T-cell (primary cell): ENCODE measurements at regions of chr14 and their contacts with region 1.

Region 1: GRCh38 chr14:92121670-92122350 is at the starts of genes CPSF2 and NDUFB1:
- DNase-seq: peak; percentile 48 to 89 (median 77)
- ATAC-seq: peak; percentile 89 to 91 (median 90)
- H3K4me3 ChIP-seq: peak within 1 kb of the TSS; percentile 66 to 94
- H3K4me3 Mint-ChIP-seq: peak within 1 kb of the TSS; percentile 98 to 99 (median 98)
- H3K27ac ChIP-seq: peak within 1 kb of the TSS; percentile 81
- H3K27ac Mint-ChIP-seq: peak within 1 kb of the TSS; percentile 100
- H3K4me1 ChIP-seq: peaks cover 18 to 26% of the 10 kb centered on the region in 2 experiments
- H3K4me1 Mint-ChIP-seq: peaks cover 42 to 52% (median 50%) of the 10 kb centered on the region in 3 donors
- H3K27me3 ChIP-seq: no peaks in the 10 kb centered on the region
- H3K27me3 Mint-ChIP-seq: no peaks in the 10 kb centered on the region
- total RNA-seq, gene CPSF2: 27.6 to 57.4 (median 45.5) TPM
- total RNA-seq, gene NDUFB1: 40.1 to 81.1 (median 75.0) TPM

Region 2: GRCh38 chr14:92021523-92021922 is 100.3 kb before region 1 on chr14:
- CTCF ChIA-PET with region 1: no interaction called
- POLR2A ChIA-PET with region 1: no interaction called
- DNase-seq: no peak
- ATAC-seq: no peak
- H3K4me3 ChIP-seq: no peak overlapping the region
- H3K4me3 Mint-ChIP-seq: no peak overlapping the region
- H3K27ac ChIP-seq: no peak overlapping the region
- H3K27ac Mint-ChIP-seq: no peak overlapping the region
- H3K4me1 ChIP-seq: no peaks in the 10 kb centered on the region
- H3K4me1 Mint-ChIP-seq: peaks cover 4 to 19% (median 12%) of the 10 kb centered on the region in 3 donors
- H3K27me3 ChIP-seq: no peaks in the 10 kb centered on the region
- H3K27me3 Mint-ChIP-seq: no peaks in the 10 kb centered on the region

Region 3: DNA sequence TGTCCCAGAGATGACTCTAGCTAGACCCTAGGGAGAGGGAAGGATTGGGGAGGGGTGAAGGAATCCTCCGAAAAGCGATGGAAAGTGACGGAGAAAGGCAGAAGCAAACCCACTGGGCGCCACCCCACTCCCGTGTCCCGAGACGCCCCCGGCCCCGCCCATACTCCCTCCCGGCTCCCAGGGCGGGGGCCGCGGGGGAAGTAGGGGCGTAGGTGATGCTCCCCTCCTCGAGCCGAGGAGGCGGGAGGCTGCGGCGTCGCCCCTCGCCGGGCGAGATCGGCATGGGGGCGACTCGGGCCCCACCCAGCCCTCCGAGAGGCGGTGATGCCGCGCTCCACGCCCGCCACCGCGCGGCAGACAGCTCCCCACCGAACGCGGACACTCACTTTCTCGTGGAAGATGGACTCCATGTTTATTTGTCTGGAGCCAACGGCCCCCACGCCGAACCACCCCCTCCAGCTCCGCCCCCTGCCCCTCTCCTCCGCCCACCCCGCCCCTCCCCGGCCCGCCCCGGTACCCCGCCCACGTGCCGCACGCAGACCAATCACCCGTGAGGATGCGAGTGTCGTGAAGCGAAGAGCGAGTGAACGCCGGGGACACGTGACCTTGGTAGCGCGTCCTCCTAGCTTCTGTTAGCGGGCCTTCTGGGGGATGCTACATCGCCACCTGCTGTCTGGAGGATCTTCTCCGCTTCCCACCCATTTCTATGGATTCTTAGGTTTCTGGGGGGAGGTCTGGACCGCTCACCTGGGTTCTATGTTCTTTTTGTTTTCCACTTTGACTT is 15.5 kb before region 1 on chr14 and contains the start of gene ATXN3:
- CTCF ChIA-PET with region 1: interaction called, 6 to 125 read pairs
- POLR2A ChIA-PET with region 1: interaction called, 6 to 14 read pairs
- DNase-seq: peak; percentile 82 to 98 (median 94)
- ATAC-seq: peak; percentile 92 to 94 (median 94)
- H3K4me3 ChIP-seq: peak within 1 kb of the TSS; percentile 83 to 90
- H3K4me3 Mint-ChIP-seq: peak within 1 kb of the TSS; percentile 90 to 99 (median 96)
- H3K27ac ChIP-seq: peak within 1 kb of the TSS; percentile 47
- H3K27ac Mint-ChIP-seq: peak within 1 kb of the TSS; percentile 93
- H3K4me1 ChIP-seq: peaks cover 14 to 29% of the 10 kb centered on the region in 2 experiments
- H3K4me1 Mint-ChIP-seq: peaks cover 55 to 61% (median 56%) of the 10 kb centered on the region in 3 donors
- H3K27me3 ChIP-seq: no peaks in the 10 kb centered on the region
- H3K27me3 Mint-ChIP-seq: no peaks in the 10 kb centered on the region
- total RNA-seq, gene ATXN3: 31.0 to 50.2 (median 41.8) TPM

Region 4: DNA sequence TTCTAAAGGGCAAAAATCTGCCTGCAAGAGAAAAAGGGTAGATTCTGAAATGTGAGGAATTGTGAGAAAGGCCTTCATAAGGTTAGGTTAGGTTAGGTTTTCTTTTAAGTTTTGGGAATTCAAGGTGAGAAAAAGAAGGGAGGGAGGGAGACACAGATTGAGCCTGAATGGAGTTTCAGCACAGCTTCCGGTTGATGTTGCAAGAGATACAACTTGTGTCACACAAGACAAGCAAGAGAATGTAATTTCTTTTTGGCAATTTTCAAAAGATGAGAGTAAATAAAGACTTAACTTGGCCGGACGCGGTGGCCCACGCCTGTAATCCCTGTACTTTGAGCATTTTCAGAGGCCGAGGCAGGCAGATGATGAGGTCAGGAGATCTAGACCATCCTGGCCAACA is 63.7 kb after region 1 on chr14:
- CTCF ChIA-PET with region 1: no interaction called
- POLR2A ChIA-PET with region 1: no interaction called
- DNase-seq: no peak
- ATAC-seq: no peak
- H3K4me3 ChIP-seq: no peak overlapping the region
- H3K4me3 Mint-ChIP-seq: no peak overlapping the region
- H3K27ac ChIP-seq: no peak overlapping the region
- H3K27ac Mint-ChIP-seq: no peak overlapping the region
- H3K4me1 ChIP-seq: no peaks in the 10 kb centered on the region
- H3K4me1 Mint-ChIP-seq: no peaks in the 10 kb centered on the region
- H3K27me3 ChIP-seq: peaks cover 0 to 13% of the 10 kb centered on the region in 2 experiments
- H3K27me3 Mint-ChIP-seq: no peaks in the 10 kb centered on the region